Right lobe of liver (tissue), 6 donors: ENCODE measurements at regions of chr16 and their contacts with region 1.

Region 1: DNA sequence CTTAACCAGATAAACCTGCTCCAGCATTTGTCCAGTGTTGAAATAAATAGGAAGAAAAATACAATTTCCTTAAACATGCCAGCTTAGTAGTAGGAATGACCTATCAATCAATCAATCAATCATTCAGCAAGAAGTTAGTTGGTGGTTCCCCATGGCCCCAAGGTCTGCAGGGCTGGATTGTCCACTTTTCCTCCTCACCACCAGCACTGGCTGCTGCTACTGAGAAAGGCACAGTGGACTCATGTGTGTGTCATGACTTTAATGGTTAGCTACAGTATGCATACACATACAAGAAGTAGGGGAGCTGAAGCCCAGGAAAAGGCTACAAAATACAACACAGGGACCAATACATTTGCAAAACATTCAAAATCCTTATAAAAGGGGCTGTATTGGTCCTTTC is 4.4 kb downstream of the SETD6 start:
- DNase-seq: no peak
- ATAC-seq: no peak
- H3K4me3 ChIP-seq: no peak overlapping the region
- H3K27ac ChIP-seq: no peak overlapping the region
- H3K4me1 ChIP-seq: peaks cover 0 to 12% (median 0%) of the 10 kb centered on the region in 4 donors
- H3K27me3 ChIP-seq: no peaks in the 10 kb centered on the region
- CTCF ChIP-seq: no peak
- POLR2A ChIP-seq: no peak

Region 2: DNA sequence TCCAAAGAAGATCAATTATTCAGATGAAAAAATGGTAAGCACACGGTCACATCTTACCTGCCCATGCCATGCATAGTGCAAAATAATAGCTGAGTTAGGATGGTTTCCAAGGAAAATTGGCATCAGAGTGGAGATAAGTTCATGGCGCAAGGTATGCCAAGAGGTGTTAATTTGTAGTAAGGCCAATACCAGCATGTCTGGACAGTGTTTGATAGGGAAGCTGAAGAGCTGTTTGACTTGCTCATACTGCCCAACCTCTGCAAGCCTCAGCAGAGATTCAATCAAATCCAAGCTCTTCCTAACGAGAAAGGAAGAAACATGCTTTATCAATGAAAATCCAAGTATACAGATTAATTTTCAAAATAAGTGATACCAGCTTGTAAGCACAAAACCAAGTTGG is 58.9 kb after region 1 on chr16:
- intact Hi-C with region 1: loop called in 1 of 2 experiments (anchors 10 kb)
- DNase-seq: no peak
- ATAC-seq: no peak
- H3K4me3 ChIP-seq: no peak overlapping the region
- H3K27ac ChIP-seq: no peak overlapping the region
- H3K4me1 ChIP-seq: peaks cover 0 to 18% (median 3%) of the 10 kb centered on the region in 4 donors
- H3K27me3 ChIP-seq: no peaks in the 10 kb centered on the region
- CTCF ChIP-seq: no peak
- POLR2A ChIP-seq: no peak

Region 3: GRCh38 chr16:59170099-59170712 is 650.5 kb after region 1 on chr16:
- intact Hi-C with region 1: no loop called
- DNase-seq: no peak
- ATAC-seq: no peak
- H3K4me3 ChIP-seq: no peak overlapping the region
- H3K27ac ChIP-seq: no peak overlapping the region
- H3K4me1 ChIP-seq: no peaks in the 10 kb centered on the region
- H3K27me3 ChIP-seq: no peaks in the 10 kb centered on the region
- CTCF ChIP-seq: no peak
- POLR2A ChIP-seq: no peak